K562 (cell line): ENCODE measurements at regions of chr2 and their contacts with region 1.

Region 1: DNA sequence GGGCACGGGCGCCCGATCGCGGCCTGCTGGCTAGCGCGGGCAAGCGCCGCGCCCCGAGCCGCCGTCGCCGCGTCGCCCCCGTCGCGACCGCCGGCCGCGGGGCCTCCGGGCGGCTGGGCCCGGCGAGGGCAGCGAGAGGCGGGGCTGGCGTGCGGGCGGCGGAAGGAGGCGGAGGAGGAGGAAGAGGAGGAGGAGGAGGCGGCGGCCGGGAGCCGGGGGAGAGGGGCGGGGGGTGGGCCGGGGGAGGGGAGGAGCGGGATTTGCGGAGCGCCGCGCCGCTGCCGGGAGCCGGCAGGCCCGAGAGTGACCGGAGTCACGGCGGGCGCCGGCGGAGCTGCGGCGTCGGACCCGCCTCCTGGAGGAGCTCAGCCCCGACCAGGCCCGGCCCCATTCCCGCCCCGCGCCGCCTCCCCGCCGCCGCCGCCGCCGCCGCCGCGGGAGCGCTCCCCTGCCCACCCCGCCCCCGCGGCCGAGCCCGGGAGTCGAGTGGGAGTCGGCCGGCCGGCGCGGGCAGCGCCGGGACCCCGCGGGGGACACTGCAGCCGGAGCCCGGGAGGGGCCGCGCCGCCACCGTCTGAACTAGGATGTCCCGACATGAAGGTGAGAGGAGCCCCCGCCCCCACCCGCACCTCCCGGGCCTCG is at the start of gene KCMF1:
- DNase-seq: peak; percentile 82 to 90 (median 88)
- ATAC-seq: peak; percentile 69
- H3K4me3 ChIP-seq: peak within 1 kb of the TSS; percentile 85
- H3K27ac ChIP-seq: peak within 1 kb of the TSS; percentile 93
- H3K4me1 ChIP-seq: peaks cover 13 to 16% of the 10 kb centered on the region in 2 experiments; a peak in 3 of 5 replicates
- H3K27me3 ChIP-seq: no peaks in the 10 kb centered on the region
- CTCF ChIP-seq: no peak
- EP300 ChIP-seq: no peak
- POLR2A ChIP-seq: no peak
- RAD21 ChIP-seq: no peak
- polyA plus RNA-seq, gene KCMF1: 6.8 to 7.5 TPM

Region 2: GRCh38 chr2:84539729-84540128 is 431.3 kb before region 1 on chr2:
- CTCF ChIA-PET with region 1: no interaction called
- POLR2A ChIA-PET with region 1: no interaction called
- in situ Hi-C with region 1: no loop called
- intact Hi-C with region 1: no loop called
- DNase-seq: no peak
- ATAC-seq: no peak
- H3K4me3 ChIP-seq: no peak overlapping the region
- H3K27ac ChIP-seq: no peak overlapping the region
- H3K4me1 ChIP-seq: no peaks in the 10 kb centered on the region
- H3K27me3 ChIP-seq: no peaks in the 10 kb centered on the region
- CTCF ChIP-seq: no peak
- EP300 ChIP-seq: no peak
- POLR2A ChIP-seq: no peak
- RAD21 ChIP-seq: no peak

Region 3: DNA sequence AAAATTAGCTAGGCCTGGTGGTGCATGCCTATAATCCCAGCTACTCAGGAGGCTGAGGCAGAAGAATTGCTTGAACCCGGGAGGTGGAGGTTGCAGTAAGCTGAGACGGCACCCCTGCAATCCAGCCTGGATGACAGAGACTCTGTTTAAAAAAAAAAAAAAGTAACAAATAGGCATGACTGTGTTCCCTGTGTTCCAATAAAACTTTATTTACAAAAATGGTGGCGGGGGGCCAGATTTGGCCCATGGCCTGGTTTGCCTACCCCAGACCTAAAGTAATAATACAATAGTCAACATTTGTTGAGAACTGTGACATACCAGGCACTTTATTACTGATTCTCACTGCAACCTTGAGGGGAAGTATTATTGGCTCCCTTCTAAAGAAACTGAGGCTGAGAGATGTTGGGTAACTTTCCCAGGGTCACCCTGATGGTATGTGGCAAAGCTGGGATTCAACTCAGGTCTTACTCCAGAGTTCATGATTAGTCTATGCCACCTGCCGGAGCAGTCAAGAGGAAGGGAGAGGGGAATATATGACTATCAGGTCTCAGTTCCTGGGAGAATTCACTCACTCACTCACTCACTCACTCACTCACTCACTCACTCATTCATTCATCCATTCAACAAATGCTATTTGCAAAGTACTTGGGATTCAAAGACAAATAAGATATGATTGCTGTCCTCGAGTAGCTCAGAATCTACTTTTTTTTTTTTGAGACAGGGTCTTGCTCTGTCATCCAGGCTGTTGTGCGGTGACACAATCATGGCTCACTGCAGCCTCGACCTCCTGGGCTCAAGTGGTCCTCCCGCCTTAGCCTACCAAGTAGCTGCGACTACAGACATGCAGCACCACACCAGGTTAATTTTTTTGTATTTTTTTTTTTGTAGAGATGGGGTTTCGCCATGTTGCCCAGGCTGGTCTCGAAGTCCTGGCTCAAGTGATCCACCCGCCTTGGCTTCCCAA is 14.4 kb before region 1 on chr2:
- CTCF ChIA-PET with region 1: interaction called, 3 read pairs
- POLR2A ChIA-PET with region 1: interaction called, 12 read pairs
- in situ Hi-C with region 1: no loop called
- intact Hi-C with region 1: no loop called
- DNase-seq: no peak
- ATAC-seq: no peak
- H3K4me3 ChIP-seq: no peak overlapping the region
- H3K27ac ChIP-seq: no peak overlapping the region
- H3K4me1 ChIP-seq: no peaks in the 10 kb centered on the region
- H3K27me3 ChIP-seq: no peaks in the 10 kb centered on the region
- CTCF ChIP-seq: no peak
- EP300 ChIP-seq: no peak
- POLR2A ChIP-seq: no peak
- RAD21 ChIP-seq: no peak

Region 4: DNA sequence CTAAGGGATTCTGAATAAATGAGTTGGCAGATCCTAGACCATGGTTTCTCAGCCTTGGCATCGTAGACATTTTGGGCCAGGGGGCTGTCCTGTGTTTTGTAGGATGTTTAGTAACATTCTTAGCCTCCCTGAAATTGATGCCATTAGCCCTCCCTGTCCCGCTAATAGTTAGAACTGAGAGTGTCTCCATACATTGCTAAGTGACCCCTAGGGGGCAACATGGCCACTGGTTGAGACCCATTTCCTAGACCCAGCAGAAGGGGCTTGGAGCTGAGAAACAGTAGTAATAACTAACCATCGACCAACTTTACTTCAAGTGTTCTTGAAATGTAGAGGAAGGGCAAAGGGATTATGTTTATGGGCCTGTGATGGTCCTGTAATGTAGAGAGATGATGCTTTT is 40.8 kb after region 1 on chr2:
- CTCF ChIA-PET with region 1: no interaction called
- POLR2A ChIA-PET with region 1: interaction called, 3 read pairs
- in situ Hi-C with region 1: no loop called
- intact Hi-C with region 1: loop called (anchors 5 kb)
- DNase-seq: peak in 1 of 4 experiments; percentile 54
- ATAC-seq: peak; percentile 85
- H3K4me3 ChIP-seq: no peak overlapping the region
- H3K27ac ChIP-seq: no peak overlapping the region
- H3K4me1 ChIP-seq: peaks cover 0 to 15% of the 10 kb centered on the region in 2 experiments; a peak in 4 of 5 replicates
- H3K27me3 ChIP-seq: no peaks in the 10 kb centered on the region
- CTCF ChIP-seq: peak; percentile 52 to 64 (median 61)
- EP300 ChIP-seq: no peak
- POLR2A ChIP-seq: no peak
- RAD21 ChIP-seq: no peak; a peak in 1 of 4 replicates

Region 5: GRCh38 chr2:85327822-85328617 is 357.0 kb after region 1 on chr2 and contains the start of gene TGOLN2:
- CTCF ChIA-PET with region 1: no interaction called
- POLR2A ChIA-PET with region 1: no interaction called
- in situ Hi-C with region 1: no loop called
- intact Hi-C with region 1: no loop called
- DNase-seq: peak; percentile 95 to 98 (median 97)
- ATAC-seq: peak; percentile 94
- H3K4me3 ChIP-seq: peak within 1 kb of the TSS; percentile 82
- H3K27ac ChIP-seq: peak within 1 kb of the TSS; percentile 97
- H3K4me1 ChIP-seq: peaks cover 21 to 27% of the 10 kb centered on the region in 2 experiments; a peak in 4 of 5 replicates
- H3K27me3 ChIP-seq: no peaks in the 10 kb centered on the region
- CTCF ChIP-seq: 0 out of 6 replicates have a peak, but pooled peaks of 2 of the 3 experiments have one; percentile 3 to 14
- EP300 ChIP-seq: no peak
- POLR2A ChIP-seq: peak; percentile 99
- RAD21 ChIP-seq: no peak
- polyA plus RNA-seq, gene TGOLN2: 13.0 to 18.0 TPM